Activated CD4-positive, alpha-beta T cell treated with anti-CD3 and anti-CD28 coated beads for 36 hours (primary cell): ENCODE measurements at regions of chr11 and their contacts with region 1.

Region 1: GRCh38 chr11:65859200-65859811 is 927 bp upstream of the MUS81 start:
- DNase-seq: peak; percentile 99
- ATAC-seq: peak; percentile 73
- H3K4me3 Mint-ChIP-seq: peak overlapping the region; percentile 91
- H3K27ac Mint-ChIP-seq: peak overlapping the region; percentile 99
- H3K4me1 Mint-ChIP-seq: peaks cover 42% of the 10 kb centered on the region
- H3K27me3 Mint-ChIP-seq: no peaks in the 10 kb centered on the region

Region 2: DNA sequence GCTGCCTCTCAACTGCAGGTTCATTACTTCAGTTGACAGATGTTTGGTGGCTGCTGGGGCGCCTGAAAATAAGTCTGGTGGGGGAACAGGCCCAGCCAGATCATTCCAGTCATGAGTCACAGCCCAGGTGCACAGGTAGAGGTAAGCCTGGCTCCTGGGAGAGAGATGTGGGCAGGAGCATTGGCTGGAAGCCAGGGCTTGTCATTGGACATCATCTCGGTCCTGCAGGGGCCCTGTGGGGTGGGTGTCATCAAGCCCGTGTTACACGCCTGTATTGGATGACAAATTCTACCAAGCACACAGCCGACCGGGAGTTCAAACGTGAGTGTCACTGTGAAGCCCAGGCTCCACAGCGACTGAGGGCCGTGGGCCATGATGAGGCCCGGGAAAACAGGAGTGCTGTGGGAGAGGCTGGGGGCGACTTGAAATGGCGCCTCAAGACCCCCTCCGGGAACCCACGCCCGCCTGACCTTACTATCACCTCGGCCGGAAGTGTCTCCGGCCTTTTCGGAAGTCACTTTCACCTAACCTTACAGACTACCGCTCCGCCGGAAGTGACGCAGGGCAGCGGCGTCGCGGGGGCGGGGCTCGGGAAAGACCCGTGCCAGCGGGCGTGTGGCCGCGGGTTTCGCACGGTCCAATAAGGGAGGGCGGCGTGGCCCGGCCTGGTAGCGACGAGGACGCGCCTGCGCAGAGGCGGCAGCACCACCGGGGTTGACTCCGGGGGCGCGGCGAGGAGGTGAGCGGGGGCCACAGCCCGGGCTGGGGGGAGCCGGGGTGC is 1618.7 kb before region 1 on chr11 and contains the start of gene FKBP2:
- CTCF ChIA-PET with region 1: no interaction called
- POLR2A ChIA-PET with region 1: no interaction called
- intact Hi-C with region 1: loop called in 1 of 2 experiments (anchors 2 kb)
- DNase-seq: peak; percentile 99
- ATAC-seq: peak; percentile 68
- H3K4me3 Mint-ChIP-seq: peak within 1 kb of the TSS; percentile 86
- H3K27ac Mint-ChIP-seq: peak within 1 kb of the TSS; percentile 99
- H3K4me1 Mint-ChIP-seq: peaks cover 31% of the 10 kb centered on the region
- H3K27me3 Mint-ChIP-seq: no peaks in the 10 kb centered on the region
- total RNA-seq, gene FKBP2: 19.9 to 21.3 TPM

Region 3: DNA sequence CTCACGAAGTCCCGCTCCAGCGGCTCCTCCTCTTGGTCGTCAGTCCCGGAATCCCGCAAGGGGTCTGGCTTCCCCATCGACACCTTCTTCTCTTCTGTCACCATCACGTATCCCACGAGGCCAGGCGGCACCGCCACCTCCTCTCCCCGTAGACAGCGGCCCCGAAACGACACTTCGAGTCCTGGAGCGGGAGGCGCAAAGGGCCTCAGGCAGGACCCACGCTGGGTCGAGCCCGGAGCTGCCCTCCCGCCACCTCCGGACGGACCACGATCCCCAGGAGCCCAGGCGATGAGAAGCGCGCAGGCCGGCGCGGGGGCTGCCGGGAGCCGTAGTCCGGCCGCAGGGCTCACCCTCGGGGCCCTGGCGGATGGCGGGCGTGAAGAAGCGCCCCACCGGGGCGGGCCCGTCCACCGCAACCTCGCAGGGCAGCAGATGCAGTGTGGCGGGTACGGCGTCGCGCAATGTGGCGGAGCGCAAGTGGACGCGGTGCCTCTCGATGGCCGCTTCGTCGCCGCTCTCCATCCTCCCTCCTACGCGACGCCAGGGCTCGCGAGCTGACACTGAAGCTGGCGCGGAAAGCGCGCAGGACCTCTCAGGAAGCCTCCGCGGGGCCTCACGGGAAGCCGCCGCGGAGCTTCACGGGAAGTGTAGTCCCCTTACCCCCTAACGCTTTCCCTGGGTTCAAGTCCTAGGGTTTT is 138.9 kb before region 1 on chr11 and contains the start of gene RNASEH2C:
- CTCF ChIA-PET with region 1: interaction called, 8 read pairs
- POLR2A ChIA-PET with region 1: no interaction called
- intact Hi-C with region 1: loop called in 1 of 2 experiments (anchors 1 kb)
- DNase-seq: peak; percentile 92
- ATAC-seq: peak; percentile 94
- H3K4me3 Mint-ChIP-seq: peak within 1 kb of the TSS; percentile 84
- H3K27ac Mint-ChIP-seq: peak within 1 kb of the TSS; percentile 88
- H3K4me1 Mint-ChIP-seq: peaks cover 23% of the 10 kb centered on the region
- H3K27me3 Mint-ChIP-seq: no peaks in the 10 kb centered on the region
- total RNA-seq, gene RNASEH2C: 72.5 to 96.8 TPM

Region 4: DNA sequence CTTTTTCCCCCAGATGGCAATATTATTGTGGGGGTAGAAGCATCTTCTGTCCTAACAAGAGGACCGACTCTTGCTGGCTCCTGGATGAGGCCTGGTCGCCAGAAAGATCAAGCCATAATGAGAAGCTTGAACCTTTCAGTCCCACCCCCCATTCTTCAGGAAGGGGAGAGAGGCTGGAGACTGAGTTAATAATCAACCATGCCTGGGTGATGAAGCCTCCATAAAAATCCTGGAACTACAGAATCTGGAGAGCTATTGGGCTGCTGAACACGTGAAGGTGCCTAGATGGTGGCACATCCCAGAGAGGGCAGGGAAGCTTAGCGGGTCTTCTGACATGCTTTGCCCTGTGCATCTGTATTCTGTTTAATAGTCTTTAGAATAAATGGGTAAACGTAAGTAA is 94.9 kb before region 1 on chr11:
- CTCF ChIA-PET with region 1: no interaction called
- POLR2A ChIA-PET with region 1: no interaction called
- intact Hi-C with region 1: no loop called
- DNase-seq: no peak
- ATAC-seq: no peak
- H3K4me3 Mint-ChIP-seq: no peak overlapping the region
- H3K27ac Mint-ChIP-seq: no peak overlapping the region
- H3K4me1 Mint-ChIP-seq: peaks cover under 1% of the 10 kb centered on the region
- H3K27me3 Mint-ChIP-seq: peaks cover under 1% of the 10 kb centered on the region

Region 5: GRCh38 chr11:65873318-65874156 is 14.2 kb after region 1 on chr11:
- CTCF ChIA-PET with region 1: interaction called, 45 read pairs
- POLR2A ChIA-PET with region 1: interaction called, 7 read pairs
- intact Hi-C with region 1: loop called (anchors 1 kb)
- DNase-seq: peak; percentile 97
- ATAC-seq: peak; percentile 93
- H3K4me3 Mint-ChIP-seq: peak overlapping the region; percentile 84
- H3K27ac Mint-ChIP-seq: peak overlapping the region; percentile 91
- H3K4me1 Mint-ChIP-seq: peaks cover 15% of the 10 kb centered on the region
- H3K27me3 Mint-ChIP-seq: no peaks in the 10 kb centered on the region

Region 6: GRCh38 chr11:65927904-65928397 is 68.6 kb after region 1 on chr11:
- CTCF ChIA-PET with region 1: interaction called, 5 read pairs
- POLR2A ChIA-PET with region 1: no interaction called
- intact Hi-C with region 1: loop called in 1 of 2 experiments (anchors 2 kb)
- DNase-seq: peak; percentile 88
- ATAC-seq: peak; percentile 94
- H3K4me3 Mint-ChIP-seq: peak overlapping the region; percentile 65
- H3K27ac Mint-ChIP-seq: peak overlapping the region; percentile 96
- H3K4me1 Mint-ChIP-seq: peaks cover 26% of the 10 kb centered on the region
- H3K27me3 Mint-ChIP-seq: no peaks in the 10 kb centered on the region

Region 7: DNA sequence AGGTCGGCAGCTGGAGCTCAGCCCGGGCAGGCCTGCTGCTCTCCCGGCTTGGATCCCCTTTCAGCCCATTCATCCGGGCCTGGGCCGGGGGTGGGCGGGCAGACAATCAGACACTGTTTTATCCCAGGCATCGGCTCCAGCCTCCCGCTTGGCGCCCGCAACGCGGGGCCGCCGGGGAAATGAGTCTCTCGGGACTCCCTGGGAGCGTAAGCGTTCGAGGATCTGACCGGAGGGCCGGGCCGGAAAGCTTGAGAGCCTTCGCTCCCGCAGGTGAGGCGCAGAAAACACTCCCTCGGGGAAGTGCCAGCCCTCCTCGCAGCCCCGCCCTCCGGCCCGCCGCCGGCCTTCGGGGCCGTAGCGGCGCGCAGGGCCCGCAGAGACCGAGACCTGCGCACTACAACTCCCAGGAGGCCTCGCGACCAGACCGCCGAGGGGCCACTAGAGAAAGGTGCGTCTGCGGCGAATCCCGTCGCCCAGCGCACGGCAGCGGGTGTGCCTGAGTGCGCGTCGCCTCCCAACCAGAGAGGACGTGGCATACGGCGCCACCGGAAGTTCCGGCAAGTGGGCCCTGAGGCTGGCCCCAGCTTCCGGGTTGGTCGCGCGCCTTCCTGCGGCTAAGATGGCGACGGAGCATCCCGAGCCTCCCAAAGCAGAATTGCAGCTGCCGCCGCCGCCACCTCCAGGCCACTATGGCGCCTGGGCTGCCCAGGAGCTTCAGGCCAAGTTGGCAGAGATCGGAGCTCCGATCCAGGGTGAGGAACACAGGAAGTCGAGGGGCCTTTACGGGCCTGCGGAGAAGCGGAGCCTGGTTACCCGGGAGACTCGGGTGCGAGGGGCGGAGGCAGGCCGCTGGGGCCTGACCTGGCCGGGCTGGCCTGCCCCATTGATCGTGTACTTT is 192.7 kb after region 1 on chr11 and contains the start of gene SF3B2:
- CTCF ChIA-PET with region 1: no interaction called
- POLR2A ChIA-PET with region 1: no interaction called
- intact Hi-C with region 1: loop called in 1 of 2 experiments (anchors 1 kb)
- DNase-seq: peak; percentile 99
- ATAC-seq: peak; percentile 99
- H3K4me3 Mint-ChIP-seq: peak within 1 kb of the TSS; percentile 91
- H3K27ac Mint-ChIP-seq: peak within 1 kb of the TSS; percentile 95
- H3K4me1 Mint-ChIP-seq: peaks cover 36% of the 10 kb centered on the region
- H3K27me3 Mint-ChIP-seq: peaks cover 4% of the 10 kb centered on the region
- total RNA-seq, gene SF3B2: 265 to 270 TPM

Region 8: GRCh38 chr11:66466225-66467027 is 607.1 kb after region 1 on chr11 and contains the start of gene PELI3:
- CTCF ChIA-PET with region 1: no interaction called
- POLR2A ChIA-PET with region 1: no interaction called
- intact Hi-C with region 1: loop called in 1 of 2 experiments (anchors 5 kb)
- DNase-seq: peak; percentile 98
- ATAC-seq: peak; percentile 88
- H3K4me3 Mint-ChIP-seq: peak within 1 kb of the TSS; percentile 85
- H3K27ac Mint-ChIP-seq: peak within 1 kb of the TSS; percentile 79
- H3K4me1 Mint-ChIP-seq: peaks cover 38% of the 10 kb centered on the region
- H3K27me3 Mint-ChIP-seq: no peaks in the 10 kb centered on the region
- total RNA-seq, gene PELI3: 5.7 to 7.0 TPM